Heart left ventricle (tissue), 16 donors: ENCODE measurements at regions of chr9 and their contacts with region 1.

Region 1: DNA sequence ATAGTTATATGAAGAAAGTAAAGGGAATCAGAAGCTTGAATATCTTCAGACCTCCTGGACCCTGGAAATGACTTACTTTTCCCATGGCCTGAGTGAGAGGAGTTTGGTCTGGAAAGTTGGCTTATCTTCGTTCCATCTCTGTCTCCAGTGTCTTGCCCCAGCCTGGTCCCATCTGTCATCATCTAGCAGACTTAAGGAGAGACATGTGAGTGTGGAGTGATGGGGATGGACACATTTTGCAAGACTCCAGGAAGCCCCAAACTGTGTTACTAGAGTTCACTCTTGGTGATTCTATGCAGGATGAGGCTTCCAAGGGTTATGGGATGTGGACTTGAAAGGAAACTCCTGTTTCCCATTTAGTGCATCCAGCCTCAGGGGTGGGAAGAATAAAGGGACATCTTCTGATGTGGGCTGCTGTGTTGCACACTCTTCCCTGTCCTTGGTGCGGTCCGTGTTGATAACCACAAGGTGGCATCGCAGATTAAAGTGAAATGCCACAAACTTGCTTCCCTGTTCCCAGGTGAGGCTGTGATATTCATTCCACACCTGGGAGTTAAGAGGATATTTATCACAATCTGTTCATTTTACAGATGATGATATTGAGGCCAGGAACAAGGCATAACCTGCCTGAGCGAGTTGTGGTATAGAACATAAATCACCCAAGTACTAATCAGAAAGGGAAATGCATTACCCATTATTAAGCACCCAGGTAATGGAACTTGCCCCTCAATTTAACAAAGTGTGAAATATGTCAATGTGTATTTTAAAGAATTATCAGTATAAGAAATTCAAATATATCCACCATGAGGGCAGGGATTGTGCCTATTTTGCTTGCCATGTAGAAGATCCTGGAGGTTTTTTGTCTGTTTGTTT is 269.9 kb upstream of the PAPPA start:
- DNase-seq: peak in 2 of 5 donors; percentile 19
- ATAC-seq: peak; percentile 47 to 83 (median 69)
- H3K4me3 ChIP-seq: no peak overlapping the region
- H3K27ac ChIP-seq: no peak overlapping the region
- H3K4me1 ChIP-seq: no peaks in the 10 kb centered on the region
- H3K27me3 ChIP-seq: no peaks in the 10 kb centered on the region
- CTCF ChIP-seq: peak; percentile 19 to 68 (median 54)
- POLR2A ChIP-seq: no peak

Region 2: GRCh38 chr9:115923903-115924668 is 40.4 kb after region 1 on chr9:
- intact Hi-C with region 1: no loop called
- DNase-seq: peak in 3 of 5 donors; percentile 41 to 73 (median 48)
- ATAC-seq: peak; percentile 95 to 98 (median 97)
- H3K4me3 ChIP-seq: no peak overlapping the region
- H3K27ac ChIP-seq: peak overlapping the region in 7 of 12 donors; percentile 11 to 72 (median 48)
- H3K4me1 ChIP-seq: peaks cover 0 to 12% (median 0%) of the 10 kb centered on the region in 12 donors
- H3K27me3 ChIP-seq: no peaks in the 10 kb centered on the region
- CTCF ChIP-seq: no peak
- POLR2A ChIP-seq: no peak

Region 3: DNA sequence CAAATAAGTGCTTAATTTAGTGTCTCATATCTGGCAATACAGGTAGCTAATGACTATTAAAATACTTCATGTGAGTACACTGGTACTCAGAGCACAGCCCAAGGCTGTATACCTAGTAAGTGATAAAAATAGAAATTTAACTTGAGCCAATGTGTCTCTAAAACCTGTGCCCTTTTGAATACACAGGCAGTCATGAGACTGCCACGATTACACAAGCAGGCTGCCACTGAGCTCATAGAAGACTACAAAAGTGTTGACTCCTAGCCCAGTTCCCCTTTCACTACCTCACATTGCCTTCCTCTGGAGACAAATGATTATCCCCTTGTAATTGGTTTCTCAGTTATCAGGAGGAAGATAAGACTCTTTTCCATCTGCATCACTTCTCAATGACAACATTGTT is 203.6 kb after region 1 on chr9:
- intact Hi-C with region 1: loop called in 1 of 10 experiments (anchors 10 kb)
- DNase-seq: peak in 4 of 5 donors; percentile 25 to 72 (median 50)
- ATAC-seq: peak; percentile 91 to 94 (median 94)
- H3K4me3 ChIP-seq: no peak overlapping the region
- H3K27ac ChIP-seq: peak overlapping the region in 11 of 12 donors; percentile 6 to 68 (median 52)
- H3K4me1 ChIP-seq: peaks cover 0 to 20% (median 5%) of the 10 kb centered on the region in 12 donors
- H3K27me3 ChIP-seq: no peaks in the 10 kb centered on the region
- CTCF ChIP-seq: no peak
- POLR2A ChIP-seq: no peak

Region 4: GRCh38 chr9:116112236-116112635 is 228.5 kb after region 1 on chr9:
- intact Hi-C with region 1: loop called in 9 of 10 experiments (anchors 2 to 10 kb)
- DNase-seq: no peak
- ATAC-seq: no peak
- H3K4me3 ChIP-seq: no peak overlapping the region
- H3K27ac ChIP-seq: no peak overlapping the region
- H3K4me1 ChIP-seq: no peaks in the 10 kb centered on the region
- H3K27me3 ChIP-seq: no peaks in the 10 kb centered on the region
- CTCF ChIP-seq: peak in 8 of 12 donors; percentile 14 to 42 (median 32)
- POLR2A ChIP-seq: no peak

Region 5: DNA sequence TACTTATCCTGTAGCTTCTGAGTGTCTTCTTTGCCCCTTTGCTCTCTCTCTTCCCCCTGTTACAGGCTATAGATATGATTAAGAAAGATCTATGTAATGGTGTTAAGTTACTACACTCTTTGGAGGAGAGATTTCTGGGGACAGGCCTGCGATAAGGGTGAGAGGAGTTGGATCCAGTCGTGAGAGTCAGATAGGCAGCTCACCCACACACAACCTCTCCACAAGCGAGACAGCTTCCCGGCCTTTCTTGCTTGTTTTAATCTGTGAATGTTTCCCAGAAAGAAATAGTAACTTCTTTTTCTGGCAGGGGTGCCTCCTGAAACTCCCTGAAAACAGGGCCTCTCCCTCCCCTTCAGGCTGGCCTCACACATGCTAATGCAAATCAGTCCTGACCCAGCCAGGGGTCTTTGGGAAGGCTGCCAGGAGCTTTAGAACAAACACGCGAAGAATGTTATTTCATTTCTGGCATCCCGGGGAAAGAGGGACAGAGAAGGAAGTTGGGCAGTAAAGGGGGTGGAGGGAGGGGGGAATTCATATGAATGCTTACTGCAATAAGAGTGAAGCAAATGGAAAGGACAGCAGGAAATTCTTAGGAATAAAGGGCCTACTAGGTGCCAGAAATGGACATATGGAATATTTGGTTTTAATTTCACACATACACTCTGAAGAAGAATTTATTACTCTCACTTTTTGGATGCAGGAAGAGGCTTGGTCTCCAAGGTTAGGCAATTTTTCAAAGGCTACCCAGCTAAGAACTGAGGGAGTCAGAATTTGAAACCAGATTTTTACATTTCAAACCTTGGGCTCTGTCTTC is 587.6 kb after region 1 on chr9:
- intact Hi-C with region 1: loop called in 1 of 10 experiments (anchors 10 kb)
- DNase-seq: peak in 4 of 5 donors; percentile 33 to 44 (median 37)
- ATAC-seq: peak in 2 of 4 donors; percentile 57 to 81
- H3K4me3 ChIP-seq: no peak overlapping the region
- H3K27ac ChIP-seq: peak overlapping the region in 7 of 12 donors; percentile 9 to 68 (median 43)
- H3K4me1 ChIP-seq: peaks cover 0 to 19% (median 8%) of the 10 kb centered on the region in 12 donors
- H3K27me3 ChIP-seq: no peaks in the 10 kb centered on the region
- CTCF ChIP-seq: no peak
- POLR2A ChIP-seq: no peak

Region 6: DNA sequence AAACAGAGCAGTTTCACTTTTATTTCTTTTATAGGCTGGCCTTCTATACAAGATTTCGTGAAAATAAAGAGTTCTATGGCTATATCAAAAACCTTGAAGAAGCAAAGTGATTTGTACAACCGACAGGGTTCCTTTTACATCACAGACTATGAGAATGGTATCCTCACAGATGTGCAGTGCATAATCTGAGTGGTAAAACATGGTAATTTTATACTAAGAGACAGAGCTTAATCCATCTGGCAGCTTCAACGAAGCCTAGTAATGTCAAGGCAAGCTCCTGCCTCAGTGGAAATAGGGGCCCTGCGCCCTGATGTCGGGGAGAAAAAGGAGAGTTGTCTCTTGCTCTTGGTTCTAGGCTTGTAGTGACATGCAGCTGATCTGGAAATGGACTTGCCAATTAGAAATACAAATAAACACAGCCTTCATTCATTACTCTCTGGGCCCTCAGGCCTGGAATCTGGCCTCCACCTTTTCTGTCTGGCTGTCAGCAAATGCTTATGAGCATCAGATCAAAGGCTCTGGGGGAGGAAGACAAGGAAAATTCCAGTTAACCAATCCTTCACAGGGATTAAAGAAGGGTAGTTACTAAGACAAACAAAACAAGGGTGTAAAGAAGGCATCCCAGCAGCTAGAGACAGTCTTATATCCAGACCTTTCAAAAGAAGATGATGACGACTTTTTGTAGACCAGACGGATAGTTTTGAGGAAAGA is 769.8 kb after region 1 on chr9:
- intact Hi-C with region 1: loop called in 4 of 10 experiments (anchors 5 to 10 kb)
- DNase-seq: no peak
- ATAC-seq: no peak
- H3K4me3 ChIP-seq: no peak overlapping the region
- H3K27ac ChIP-seq: peak overlapping the region in 7 of 12 donors; percentile 4 to 61 (median 20)
- H3K4me1 ChIP-seq: peaks cover 0 to 24% (median 10%) of the 10 kb centered on the region in 12 donors
- H3K27me3 ChIP-seq: no peaks in the 10 kb centered on the region
- CTCF ChIP-seq: no peak
- POLR2A ChIP-seq: no peak